ENCODE measurements at regions of chrX and their contacts with region 1.

Region 1: GRCh38 chrX:21940356-21940829 is at the start of gene SMS:
- DNase-seq: peak; percentile 58
- H3K4me3 Mint-ChIP-seq: peak within 1 kb of the TSS; percentile 85
- H3K27ac Mint-ChIP-seq: peak within 1 kb of the TSS; percentile 90
- H3K4me1 Mint-ChIP-seq: peaks cover 28% of the 10 kb centered on the region
- H3K27me3 Mint-ChIP-seq: no peaks in the 10 kb centered on the region
- total RNA-seq, gene SMS: 148 to 156 TPM

Region 2: GRCh38 chrX:21616386-21616785 is 324.0 kb before region 1 on chrX:
- CTCF ChIA-PET with region 1: no interaction called
- intact Hi-C with region 1: no loop called
- DNase-seq: no peak
- H3K4me3 Mint-ChIP-seq: no peak overlapping the region
- H3K27ac Mint-ChIP-seq: no peak overlapping the region
- H3K4me1 Mint-ChIP-seq: peaks cover 5% of the 10 kb centered on the region
- H3K27me3 Mint-ChIP-seq: no peaks in the 10 kb centered on the region

Region 3: GRCh38 chrX:21847342-21847741 is 93.1 kb before region 1 on chrX:
- CTCF ChIA-PET with region 1: no interaction called
- intact Hi-C with region 1: no loop called
- DNase-seq: no peak
- H3K4me3 Mint-ChIP-seq: no peak overlapping the region
- H3K27ac Mint-ChIP-seq: no peak overlapping the region
- H3K4me1 Mint-ChIP-seq: no peaks in the 10 kb centered on the region
- H3K27me3 Mint-ChIP-seq: no peaks in the 10 kb centered on the region

Region 4: DNA sequence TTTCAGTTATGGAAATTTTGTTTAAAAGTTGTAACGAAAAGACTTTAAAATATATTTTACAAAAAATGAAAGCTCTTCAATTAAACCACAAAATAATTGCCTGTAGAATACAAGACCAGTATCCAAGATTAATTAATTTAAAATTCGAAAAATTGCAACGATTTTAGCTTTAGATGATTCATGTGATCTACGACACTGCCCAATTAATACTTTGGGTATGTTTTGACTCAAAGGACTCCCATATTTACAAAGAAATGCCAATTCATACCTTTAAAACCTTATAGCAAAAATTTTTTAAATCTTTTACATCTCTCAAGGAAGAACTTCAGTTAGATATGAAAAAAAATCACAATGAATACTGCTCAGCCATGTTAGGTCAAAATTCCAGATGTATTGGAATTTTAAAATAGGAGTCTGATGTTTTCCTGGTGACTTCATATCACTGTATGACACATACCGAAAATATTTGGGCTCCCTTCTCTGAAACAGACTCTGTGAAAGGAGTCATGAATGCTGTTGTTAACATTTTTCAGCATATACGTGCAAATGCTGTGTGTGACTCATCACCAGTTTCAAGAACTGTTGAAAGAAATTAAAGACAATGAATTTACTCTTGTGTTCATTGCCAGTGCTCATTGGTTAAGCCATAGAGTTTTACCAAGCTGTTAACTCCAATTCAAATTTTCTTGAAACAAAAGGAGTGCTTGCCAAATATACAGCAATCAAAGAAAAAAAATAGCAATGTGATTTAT is 13.7 kb before region 1 on chrX:
- CTCF ChIA-PET with region 1: no interaction called
- intact Hi-C with region 1: loop called (anchors 1 kb)
- DNase-seq: peak; percentile 26
- H3K4me3 Mint-ChIP-seq: no peak overlapping the region
- H3K27ac Mint-ChIP-seq: peak overlapping the region; percentile 68
- H3K4me1 Mint-ChIP-seq: peaks cover 26% of the 10 kb centered on the region
- H3K27me3 Mint-ChIP-seq: no peaks in the 10 kb centered on the region

Region 5: GRCh38 chrX:21972721-21973120 is 32.3 kb after region 1 on chrX:
- CTCF ChIA-PET with region 1: no interaction called
- intact Hi-C with region 1: loop called (anchors 1 kb)
- DNase-seq: peak; percentile 64
- H3K4me3 Mint-ChIP-seq: no peak overlapping the region
- H3K27ac Mint-ChIP-seq: peak overlapping the region; percentile 87
- H3K4me1 Mint-ChIP-seq: peaks cover 35% of the 10 kb centered on the region
- H3K27me3 Mint-ChIP-seq: no peaks in the 10 kb centered on the region

Region 6: DNA sequence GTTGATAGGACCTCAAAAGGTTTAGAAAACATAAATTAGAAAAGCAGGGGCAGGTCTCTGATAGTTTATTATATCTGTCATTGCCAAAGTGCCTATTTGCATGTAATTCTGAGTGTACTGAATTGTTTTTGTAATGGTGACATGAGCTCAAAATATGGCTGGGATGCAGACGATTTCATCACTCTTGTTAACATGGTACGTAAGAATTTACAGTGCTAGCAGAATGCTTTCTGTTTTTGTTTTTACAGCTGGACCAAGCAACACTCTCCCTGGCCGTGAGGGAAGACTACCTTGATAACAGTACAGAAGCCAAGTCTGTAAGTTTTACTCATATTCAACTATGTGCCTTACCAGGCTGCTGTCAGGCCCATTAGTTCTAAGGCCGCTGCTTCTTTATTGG is 149.8 kb after region 1 on chrX:
- CTCF ChIA-PET with region 1: no interaction called
- intact Hi-C with region 1: loop called (anchors 5 kb)
- DNase-seq: no peak
- H3K4me3 Mint-ChIP-seq: peak overlapping the region; percentile 66
- H3K27ac Mint-ChIP-seq: peak overlapping the region; percentile 66
- H3K4me1 Mint-ChIP-seq: peaks cover 22% of the 10 kb centered on the region
- H3K27me3 Mint-ChIP-seq: no peaks in the 10 kb centered on the region

Measured in activated naive CD4-positive, alpha-beta T cell treated with anti-CD3 and anti-CD28 coated beads for 36 hours (primary cell).